ENCODE measurements at regions of chr5 and their contacts with region 1.

Region 1: GRCh38 chr5:172479044-172479783 is 24.9 kb upstream of the SH3PXD2B start:
- DNase-seq: peak; percentile 75 to 78
- H3K4me3 ChIP-seq: no peak overlapping the region
- H3K27ac ChIP-seq: no peak overlapping the region
- H3K4me1 ChIP-seq: peaks cover 0 to 4% (median 2%) of the 10 kb centered on the region in 4 experiments; a peak in 2 of 7 replicates
- H3K27me3 ChIP-seq: peaks cover 0 to 2% (median 0%) of the 10 kb centered on the region in 4 experiments; a peak in 1 of 7 replicates
- CTCF ChIP-seq: peak; percentile 83 to 99 (median 85)
- EP300 ChIP-seq: no peak
- POLR2A ChIP-seq: no peak
- RAD21 ChIP-seq: peak; percentile 88 to 95

Region 2: DNA sequence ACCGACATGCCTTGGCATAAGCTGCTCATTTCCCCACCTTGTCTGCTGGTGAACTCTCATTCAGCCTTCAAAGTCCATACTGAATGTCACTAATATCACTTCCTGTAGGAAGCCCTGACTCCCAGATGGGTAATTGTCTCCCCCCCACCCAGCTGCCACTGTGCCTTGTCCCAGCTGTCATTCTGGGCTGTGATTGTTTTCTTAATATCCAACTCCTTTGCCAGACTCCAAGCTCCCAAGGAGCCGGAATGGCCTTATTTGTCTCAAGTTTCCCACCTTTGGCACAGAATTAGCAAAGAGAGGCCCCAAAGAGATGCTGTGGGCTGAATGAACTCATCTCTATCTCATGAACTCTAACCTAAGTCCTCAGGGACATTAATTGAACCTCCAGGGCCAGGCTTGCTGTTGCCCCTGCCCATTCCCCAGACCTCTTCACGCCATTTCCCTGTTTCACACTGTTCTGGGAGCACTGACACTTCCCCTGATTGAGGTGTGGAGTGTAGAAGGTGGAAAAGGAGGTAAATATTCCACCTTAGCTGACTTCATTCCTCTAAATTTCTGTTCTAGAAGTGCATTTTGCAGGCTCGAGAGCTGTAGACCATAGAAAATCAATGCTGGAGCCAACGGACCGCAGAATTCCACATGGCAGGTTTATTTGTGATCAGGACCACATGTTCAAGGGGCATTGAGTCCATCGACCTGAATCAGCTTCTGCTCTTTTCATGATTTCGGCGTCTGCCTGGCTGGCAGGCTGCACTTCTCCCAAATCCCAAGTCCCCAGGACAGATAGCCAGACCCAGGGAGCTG is 20.0 kb before region 1 on chr5:
- CTCF ChIA-PET with region 1: interaction called, 11 read pairs
- POLR2A ChIA-PET with region 1: no interaction called
- DNase-seq: no peak
- H3K4me3 ChIP-seq: no peak overlapping the region
- H3K27ac ChIP-seq: no peak overlapping the region
- H3K4me1 ChIP-seq: peaks cover 9 to 12% (median 12%) of the 10 kb centered on the region in 4 experiments
- H3K27me3 ChIP-seq: no peaks in the 10 kb centered on the region; a peak in 3 of 7 replicates
- CTCF ChIP-seq: no peak
- EP300 ChIP-seq: no peak
- POLR2A ChIP-seq: no peak
- RAD21 ChIP-seq: no peak

Region 3: GRCh38 chr5:172586125-172587060 is 107.2 kb after region 1 on chr5:
- CTCF ChIA-PET with region 1: interaction called, 11 read pairs
- POLR2A ChIA-PET with region 1: no interaction called
- DNase-seq: peak; percentile 54 to 70
- H3K4me3 ChIP-seq: peak overlapping the region in 2 of 4 experiments; percentile 12 to 28; a peak in 3 of 8 replicates
- H3K27ac ChIP-seq: 0 out of 2 replicates have a peak overlapping the region, but pooled peaks have one; percentile 12
- H3K4me1 ChIP-seq: peaks cover 4 to 26% (median 13%) of the 10 kb centered on the region in 4 experiments
- H3K27me3 ChIP-seq: peaks cover 0 to 4% (median 4%) of the 10 kb centered on the region in 4 experiments; a peak in 1 of 7 replicates
- CTCF ChIP-seq: no peak
- EP300 ChIP-seq: no peak
- POLR2A ChIP-seq: no peak
- RAD21 ChIP-seq: no peak

Region 4: GRCh38 chr5:172640822-172641358 is 161.7 kb after region 1 on chr5 and contains the start of gene NEURL1B:
- CTCF ChIA-PET with region 1: interaction called, 46 read pairs
- POLR2A ChIA-PET with region 1: no interaction called
- DNase-seq: peak in 1 of 2 experiments; percentile 87
- H3K4me3 ChIP-seq: peak within 1 kb of the TSS; percentile 60 to 87 (median 68)
- H3K27ac ChIP-seq: no peak within 1 kb of the TSS
- H3K4me1 ChIP-seq: peaks cover 0 to 22% (median 7%) of the 10 kb centered on the region in 4 experiments; a peak in 3 of 7 replicates
- H3K27me3 ChIP-seq: peaks cover 0 to 24% (median 15%) of the 10 kb centered on the region in 4 experiments; a peak in 6 of 7 replicates
- CTCF ChIP-seq: peak in 1 of 3 experiments; percentile 4; a peak in 1 of 4 replicates
- EP300 ChIP-seq: no peak
- POLR2A ChIP-seq: no peak
- RAD21 ChIP-seq: no peak; a peak in 1 of 4 replicates
- total RNA-seq, gene NEURL1B: 5.7 and 6.1 TPM in 2 replicates

Region 5: GRCh38 chr5:172666251-172666650 is 187.0 kb after region 1 on chr5:
- CTCF ChIA-PET with region 1: interaction called, 13 read pairs
- POLR2A ChIA-PET with region 1: no interaction called
- DNase-seq: peak in 1 of 2 experiments; percentile 61
- H3K4me3 ChIP-seq: no peak overlapping the region
- H3K27ac ChIP-seq: no peak overlapping the region
- H3K4me1 ChIP-seq: no peaks in the 10 kb centered on the region
- H3K27me3 ChIP-seq: no peaks in the 10 kb centered on the region; a peak in 1 of 7 replicates
- CTCF ChIP-seq: peak; percentile 26 to 70 (median 63)
- EP300 ChIP-seq: no peak
- POLR2A ChIP-seq: no peak
- RAD21 ChIP-seq: peak; percentile 58 to 81